Astrocyte of the cerebellum (primary cell): ENCODE measurements at regions of chr6 and their contacts with region 1.

Region 1: GRCh38 chr6:43149265-43149664 is 21.8 kb upstream of the SRF start:
- DNase-seq: no peak
- H3K4me3 ChIP-seq: no peak overlapping the region
- CTCF ChIP-seq: no peak

Region 2: DNA sequence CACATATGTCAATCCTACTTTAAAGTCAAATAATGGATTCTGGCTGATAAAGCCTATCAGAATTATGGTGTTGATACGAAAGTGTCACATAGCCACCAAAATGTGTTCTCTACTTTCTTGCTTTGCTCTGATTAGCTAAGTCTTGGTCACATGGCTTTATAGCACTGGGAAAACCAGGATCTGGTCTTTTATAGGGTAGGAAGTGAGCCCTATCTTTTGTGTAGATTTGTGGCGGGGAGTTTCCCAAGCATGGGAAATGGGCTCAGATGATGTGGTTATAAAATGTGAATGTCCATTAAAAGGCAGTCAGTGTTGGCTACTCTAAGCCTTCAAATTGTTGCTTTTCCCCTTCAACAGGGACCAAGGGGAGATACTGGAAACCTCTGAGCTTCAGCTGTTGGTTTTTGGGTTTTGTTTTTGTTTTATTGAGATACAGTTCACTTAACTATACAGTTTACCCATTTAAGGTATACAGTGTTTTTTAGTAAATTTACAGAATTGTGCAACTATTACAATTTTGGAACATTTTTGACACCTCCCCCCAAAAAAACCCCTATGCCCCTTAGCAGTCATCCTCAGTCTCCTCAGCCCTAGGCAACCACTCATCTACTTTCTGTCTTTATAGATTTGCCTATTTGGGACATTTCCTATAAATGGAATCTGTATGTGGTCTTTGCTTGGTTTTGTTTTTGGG is 115.6 kb before region 1 on chr6:
- in situ Hi-C with region 1: loop called (anchors 5 kb)
- DNase-seq: no peak
- H3K4me3 ChIP-seq: no peak overlapping the region
- CTCF ChIP-seq: no peak